Posterior cingulate gyrus (tissue), 11 donors: ENCODE measurements at regions of chr2 and their contacts with region 1.

Region 1: GRCh38 chr2:48420512-48421197 is 109.3 kb upstream of the STON1 start:
- DNase-seq: peak; percentile 81 to 98 (median 94)

Region 2: GRCh38 chr2:48205137-48205798 is 215.4 kb before region 1 on chr2:
- intact Hi-C with region 1: loop called (anchors 5 kb)
- DNase-seq: peak in 7 of 10 donors; percentile 26 to 91 (median 58)

Region 3: GRCh38 chr2:48406116-48406515 is 14.5 kb before region 1 on chr2:
- intact Hi-C with region 1: no loop called
- DNase-seq: no peak

Region 4: GRCh38 chr2:48589170-48589767 is 168.6 kb after region 1 on chr2:
- intact Hi-C with region 1: loop called (anchors 5 kb)
- DNase-seq: peak in 7 of 10 donors; percentile 24 to 89 (median 65)